ENCODE measurements at regions of chr17 and their contacts with region 1.

Region 1: DNA sequence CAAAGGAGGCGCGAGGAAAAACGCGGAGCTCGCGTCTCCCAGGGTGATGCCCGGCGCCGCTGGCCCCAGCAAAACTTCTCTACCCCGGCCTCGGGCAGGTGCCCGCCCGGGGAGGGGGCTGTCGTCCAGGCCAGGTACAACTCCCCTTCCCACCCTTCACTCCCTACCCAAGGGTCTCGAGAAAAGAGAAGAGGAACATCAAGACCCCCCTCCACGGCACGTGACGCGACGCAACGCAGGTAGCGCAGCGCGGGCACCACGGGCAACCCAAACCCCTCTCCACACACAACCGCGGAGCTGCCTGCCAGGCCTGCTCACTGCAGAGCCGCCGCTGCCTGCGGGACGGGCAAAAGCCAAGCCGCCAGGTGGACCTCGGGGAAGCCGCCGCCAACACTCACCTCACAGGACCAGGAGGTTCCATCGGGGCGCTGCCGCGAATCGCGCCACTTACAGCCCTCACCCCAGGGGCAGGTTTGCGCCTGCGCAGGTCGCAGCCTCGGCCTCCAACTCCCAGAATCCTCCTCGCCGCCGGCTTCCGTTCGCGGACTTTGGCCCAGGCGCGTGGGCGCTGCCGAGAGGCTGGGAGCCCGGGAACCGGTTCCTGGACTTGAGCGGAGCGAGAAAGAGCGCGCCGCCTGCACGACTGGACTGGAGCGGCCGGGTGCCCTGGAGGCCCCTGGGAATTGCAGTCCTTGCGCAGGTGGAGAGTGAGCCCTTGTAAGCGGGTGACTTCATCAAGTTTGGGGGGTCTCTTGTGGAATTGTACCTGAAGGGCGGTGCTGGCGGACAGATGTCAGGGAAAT is at the start of gene ZNF232:
- DNase-seq: peak; percentile 93 to 98 (median 97)
- ATAC-seq: peak; percentile 92 to 98 (median 96)
- H3K4me3 ChIP-seq: peak within 1 kb of the TSS; percentile 63 to 98 (median 82)
- H3K27ac ChIP-seq: peak within 1 kb of the TSS in 11 of 12 donors; percentile 24 to 87 (median 76)
- H3K4me1 ChIP-seq: peaks cover 0 to 23% (median 12%) of the 10 kb centered on the region in 12 donors
- H3K27me3 ChIP-seq: peaks cover 0 to 21% (median 16%) of the 10 kb centered on the region in 9 donors
- CTCF ChIP-seq: peak in 3 of 12 donors; percentile 8 to 29 (median 10)
- POLR2A ChIP-seq: peak in 1 of 2 donors; percentile 62
- total RNA-seq, gene ZNF232: 2.2 to 6.5 (median 4.4) TPM

Region 2: DNA sequence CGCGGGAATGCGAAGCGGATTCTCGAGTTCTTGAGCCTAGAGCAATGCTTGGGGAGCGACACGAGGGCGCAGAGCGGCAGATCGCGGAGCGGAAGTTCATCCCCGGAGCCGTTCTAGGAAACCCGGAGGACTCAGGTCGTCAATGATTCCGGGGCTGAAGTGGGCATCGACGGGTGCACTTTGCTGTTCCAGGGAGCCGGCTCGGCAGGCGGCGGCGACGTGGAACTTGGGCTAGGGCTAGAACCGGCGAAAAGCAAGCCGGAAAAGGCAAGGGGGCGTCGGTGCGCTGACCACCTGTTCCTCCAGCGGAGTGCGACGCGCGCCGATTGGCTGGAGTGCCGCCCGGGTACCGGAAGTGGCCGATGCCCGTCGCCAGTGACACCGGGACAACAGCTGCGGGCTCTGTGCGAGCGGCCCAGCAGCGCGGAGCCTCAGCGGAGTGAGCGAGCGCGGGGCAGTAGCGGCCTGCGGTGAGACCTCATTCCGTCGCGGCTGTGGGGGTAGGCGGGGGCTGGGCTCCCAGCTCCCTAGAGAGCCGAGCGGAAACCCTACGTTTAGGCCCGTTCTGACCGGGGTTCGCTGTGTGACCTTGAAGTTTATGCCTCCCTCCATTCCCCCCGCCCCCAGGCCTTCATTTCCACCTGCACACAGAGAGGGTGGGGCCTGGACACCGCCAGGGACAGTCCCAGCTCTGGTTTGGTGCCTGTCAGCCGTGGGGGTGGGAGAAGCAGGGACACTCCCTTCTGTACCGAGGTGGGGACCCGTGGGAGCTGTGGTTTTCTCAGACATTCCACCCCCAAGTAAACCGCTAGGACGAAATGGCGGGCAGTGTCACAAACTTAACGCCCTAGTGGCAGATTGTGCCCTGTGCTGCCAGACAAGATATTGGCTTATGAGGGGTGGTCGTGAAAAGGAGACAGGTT is 33.2 kb before region 1 on chr17 and contains the start of gene ZFP3:
- intact Hi-C with region 1: loop called in 1 of 10 experiments (anchors 5 kb)
- DNase-seq: peak; percentile 87 to 94 (median 90)
- ATAC-seq: peak; percentile 88 to 97 (median 97)
- H3K4me3 ChIP-seq: peak within 1 kb of the TSS; percentile 66 to 94 (median 82)
- H3K27ac ChIP-seq: peak within 1 kb of the TSS; percentile 68 to 93 (median 88)
- H3K4me1 ChIP-seq: peaks cover 0 to 27% (median 11%) of the 10 kb centered on the region in 12 donors
- H3K27me3 ChIP-seq: no peaks in the 10 kb centered on the region
- CTCF ChIP-seq: peak in 3 of 12 donors; percentile 10 to 33 (median 10)
- POLR2A ChIP-seq: peak in 1 of 2 donors; percentile 63
- total RNA-seq, gene ZFP3: 4.6 to 14.5 (median 11.1) TPM

Region 3: GRCh38 chr17:5155495-5155894 is 43.9 kb after region 1 on chr17:
- intact Hi-C with region 1: no loop called
- DNase-seq: no peak
- ATAC-seq: no peak
- H3K4me3 ChIP-seq: no peak overlapping the region
- H3K27ac ChIP-seq: no peak overlapping the region
- H3K4me1 ChIP-seq: no peaks in the 10 kb centered on the region
- H3K27me3 ChIP-seq: no peaks in the 10 kb centered on the region
- CTCF ChIP-seq: no peak
- POLR2A ChIP-seq: no peak

Region 4: GRCh38 chr17:5630434-5630833 is 518.8 kb after region 1 on chr17:
- intact Hi-C with region 1: no loop called
- DNase-seq: no peak
- ATAC-seq: no peak
- H3K4me3 ChIP-seq: no peak overlapping the region
- H3K27ac ChIP-seq: no peak overlapping the region
- H3K4me1 ChIP-seq: no peaks in the 10 kb centered on the region
- H3K27me3 ChIP-seq: peaks cover 0 to 44% (median 5%) of the 10 kb centered on the region in 9 donors
- CTCF ChIP-seq: no peak
- POLR2A ChIP-seq: no peak